Testis (tissue), 5 donors: ENCODE measurements at regions of chr14 and their contacts with region 1.

Region 1: DNA sequence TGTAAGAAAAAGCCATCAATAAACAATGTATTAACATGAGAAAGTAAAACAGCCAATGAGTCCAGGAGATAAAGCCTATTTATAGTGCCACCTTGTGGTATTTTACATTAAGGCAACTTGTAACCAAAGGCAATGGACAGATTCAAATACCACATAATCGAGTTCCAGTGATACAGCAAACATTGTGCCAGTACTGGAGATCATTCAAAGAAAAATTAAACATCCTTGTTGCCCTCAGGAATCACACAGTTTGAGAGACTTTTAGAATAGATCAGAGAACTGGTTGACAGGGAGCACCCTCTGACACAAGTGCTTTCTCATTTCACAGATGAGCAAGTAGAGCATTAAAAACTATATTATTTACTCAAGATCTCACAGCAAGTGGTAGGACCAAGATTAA is 98.1 kb downstream of the DDHD1 start:
- DNase-seq: no peak
- H3K4me3 ChIP-seq: no peak overlapping the region
- H3K27ac ChIP-seq: no peak overlapping the region
- H3K4me1 ChIP-seq: no peaks in the 10 kb centered on the region
- H3K27me3 ChIP-seq: no peaks in the 10 kb centered on the region
- CTCF ChIP-seq: peak; percentile 33 to 72 (median 44)
- POLR2A ChIP-seq: no peak

Region 2: DNA sequence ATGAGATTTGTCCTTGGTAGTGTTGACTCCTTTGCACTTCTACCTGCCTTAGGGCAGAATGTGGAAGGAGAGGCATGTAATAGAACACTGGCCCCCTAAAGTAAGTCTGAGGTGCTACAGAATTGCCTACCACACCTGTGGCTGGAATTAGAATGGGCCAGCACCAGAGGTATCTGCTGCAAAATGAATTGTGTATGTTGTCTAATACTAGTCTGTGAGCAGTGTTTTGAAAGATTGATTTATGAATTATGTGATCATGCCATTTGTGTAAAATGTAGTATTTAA is 330.7 kb before region 1 on chr14:
- intact Hi-C with region 1: no loop called
- DNase-seq: no peak
- H3K4me3 ChIP-seq: no peak overlapping the region
- H3K27ac ChIP-seq: no peak overlapping the region
- H3K4me1 ChIP-seq: no peaks in the 10 kb centered on the region
- H3K27me3 ChIP-seq: no peaks in the 10 kb centered on the region
- CTCF ChIP-seq: no peak
- POLR2A ChIP-seq: no peak

Region 3: DNA sequence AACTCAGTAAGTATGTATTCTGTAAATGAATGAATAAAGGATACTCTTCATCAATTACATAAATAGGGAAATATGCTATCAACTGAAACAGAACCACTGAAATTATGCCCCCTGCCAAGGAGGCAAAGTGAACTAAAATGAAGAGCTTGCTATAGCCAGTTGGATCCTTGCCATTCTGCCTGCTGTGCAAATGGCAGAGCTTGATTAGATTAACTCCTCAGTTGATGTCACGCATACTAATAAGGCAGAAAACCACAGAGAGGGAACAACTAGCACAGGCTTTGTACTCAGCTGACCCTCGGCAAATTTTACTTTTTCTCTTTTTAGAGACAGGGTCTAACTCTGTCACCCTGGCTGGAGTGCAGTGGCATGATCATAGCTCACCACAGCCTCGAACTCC is 67.5 kb before region 1 on chr14:
- intact Hi-C with region 1: loop called (anchors 10 kb)
- DNase-seq: no peak
- H3K4me3 ChIP-seq: no peak overlapping the region
- H3K27ac ChIP-seq: no peak overlapping the region
- H3K4me1 ChIP-seq: no peaks in the 10 kb centered on the region
- H3K27me3 ChIP-seq: no peaks in the 10 kb centered on the region
- CTCF ChIP-seq: no peak
- POLR2A ChIP-seq: no peak